ENCODE measurements at regions of chr12 and their contacts with region 1.

Region 1: GRCh38 chr12:57583008-57583831 is 7.8 kb upstream of the PIP4K2C start:
- DNase-seq: no peak
- H3K4me3 ChIP-seq: no peak overlapping the region
- H3K27ac ChIP-seq: no peak overlapping the region
- H3K4me1 ChIP-seq: no peaks in the 10 kb centered on the region
- H3K27me3 ChIP-seq: peaks cover 49% of the 10 kb centered on the region
- CTCF ChIP-seq: peak; percentile 98

Region 2: GRCh38 chr12:57621497-57622292 is 38.5 kb after region 1 on chr12:
- intact Hi-C with region 1: loop called (anchors 5 kb)
- DNase-seq: peak; percentile 64
- H3K4me3 ChIP-seq: peak overlapping the region; percentile 66
- H3K27ac ChIP-seq: no peak overlapping the region
- H3K4me1 ChIP-seq: peaks cover 41% of the 10 kb centered on the region
- H3K27me3 ChIP-seq: peaks cover 88% of the 10 kb centered on the region
- CTCF ChIP-seq: peak; percentile 94